MCF 10A (cell line): ENCODE measurements at regions of chr16 and their contacts with region 1.

Region 1: GRCh38 chr16:1492923-1493745 is at the start of gene TELO2:
- DNase-seq: peak; percentile 72
- H3K4me3 Mint-ChIP-seq: peak within 1 kb of the TSS; percentile 78
- H3K27ac Mint-ChIP-seq: peak within 1 kb of the TSS; percentile 90
- H3K4me1 Mint-ChIP-seq: no peaks in the 10 kb centered on the region
- H3K27me3 Mint-ChIP-seq: no peaks in the 10 kb centered on the region
- CTCF ChIP-seq: no peak
- total RNA-seq, gene TELO2: 27.7 and 31.3 TPM in 2 replicates

Region 2: GRCh38 chr16:1477033-1477432 is 16.1 kb before region 1 on chr16:
- CTCF ChIA-PET with region 1: no interaction called
- POLR2A ChIA-PET with region 1: interaction called, 10 read pairs
- intact Hi-C with region 1: no loop called
- DNase-seq: no peak
- H3K4me3 Mint-ChIP-seq: no peak overlapping the region
- H3K27ac Mint-ChIP-seq: no peak overlapping the region
- H3K4me1 Mint-ChIP-seq: peaks cover 6% of the 10 kb centered on the region
- H3K27me3 Mint-ChIP-seq: no peaks in the 10 kb centered on the region
- CTCF ChIP-seq: no peak